Transverse colon (tissue), 4 donors: ENCODE measurements at regions of chr1 and their contacts with region 1.

Region 1: GRCh38 chr1:147890177-147890790 is 12.3 kb upstream of the GJA8 start:
- DNase-seq: peak; percentile 62
- H3K4me3 ChIP-seq: no peak overlapping the region
- H3K27ac ChIP-seq: no peak overlapping the region
- H3K4me1 ChIP-seq: no peaks in the 10 kb centered on the region
- H3K27me3 ChIP-seq: peaks cover 4% of the 10 kb centered on the region
- CTCF ChIP-seq: peak; percentile 28 to 47 (median 45)
- EP300 ChIP-seq: no peak
- POLR2A ChIP-seq: no peak

Region 2: GRCh38 chr1:147700042-147701006 is 190.0 kb before region 1 on chr1:
- in situ Hi-C with region 1: loop called in 3 of 4 experiments (anchors 10 to 25 kb)
- intact Hi-C with region 1: no loop called
- DNase-seq: peak; percentile 66
- H3K4me3 ChIP-seq: no peak overlapping the region
- H3K27ac ChIP-seq: no peak overlapping the region
- H3K4me1 ChIP-seq: peaks cover 0 to 3% (median 0%) of the 10 kb centered on the region in 4 donors
- H3K27me3 ChIP-seq: no peaks in the 10 kb centered on the region
- CTCF ChIP-seq: peak; percentile 62 to 79 (median 77)
- EP300 ChIP-seq: no peak
- POLR2A ChIP-seq: no peak

Region 3: DNA sequence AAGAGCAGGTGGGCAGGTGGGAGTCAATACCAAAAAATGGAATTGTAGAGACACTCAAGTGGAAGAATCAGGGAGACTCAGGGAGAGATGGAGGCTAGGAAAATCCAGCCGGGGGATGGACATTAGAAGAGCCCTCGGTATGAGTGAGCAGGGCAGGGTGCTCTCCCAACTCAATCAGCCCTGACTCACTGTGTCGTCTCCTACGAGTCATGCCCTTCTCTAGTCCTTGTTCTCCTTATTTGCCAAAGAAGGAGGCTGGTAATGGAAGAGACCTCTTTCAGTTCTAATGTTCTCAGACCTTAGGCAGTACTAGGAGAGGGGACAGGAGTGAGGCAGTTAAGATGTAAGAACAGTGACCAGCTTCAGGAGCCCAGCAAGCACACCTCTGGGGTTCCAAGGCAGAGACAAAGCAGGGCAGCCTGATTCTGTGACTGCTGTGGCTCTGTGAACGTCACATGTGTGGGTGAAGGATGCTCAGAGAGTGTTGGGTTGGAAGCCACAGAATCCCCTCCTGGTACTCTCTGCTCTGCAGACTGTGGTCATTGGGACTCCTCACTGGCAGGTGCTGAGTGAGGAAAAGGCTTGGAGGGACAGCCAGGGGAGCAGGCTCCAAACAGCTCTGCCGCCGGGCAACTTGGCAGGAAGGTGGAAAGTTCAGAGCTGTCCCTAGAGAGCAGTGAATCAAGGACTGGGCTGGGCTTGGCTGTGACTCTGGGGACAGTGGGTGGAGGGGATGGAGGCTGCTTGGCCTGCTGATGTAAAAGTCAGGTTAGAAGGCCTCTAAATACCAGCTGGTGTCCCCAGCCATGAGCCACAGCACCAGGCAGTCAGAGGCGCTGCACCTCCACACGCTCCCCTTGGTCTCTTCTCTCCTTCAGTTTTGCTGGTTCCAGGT is 118.8 kb before region 1 on chr1:
- in situ Hi-C with region 1: no loop called
- intact Hi-C with region 1: no loop called
- DNase-seq: no peak
- H3K4me3 ChIP-seq: no peak overlapping the region
- H3K27ac ChIP-seq: peak overlapping the region in 2 of 4 donors; percentile 13 to 17
- H3K4me1 ChIP-seq: no peaks in the 10 kb centered on the region
- H3K27me3 ChIP-seq: peaks cover 13% of the 10 kb centered on the region
- CTCF ChIP-seq: no peak
- EP300 ChIP-seq: no peak
- POLR2A ChIP-seq: no peak